Activated T-helper 1 cell treated with anti-CD3 and anti-CD28 coated beads, Interleukin-12 subunit alpha, Interleukin-12 subunit beta, Interleukin-2, Interleukin-4 antibody, amounts not matched to agents 30 ng/mL and 10 ng/mL and 1 ng/mL, durations not matched to agents 14 hours and 24 hours and 36 hours (primary cell): ENCODE measurements at regions of chr6 and their contacts with region 1.

Region 1: DNA sequence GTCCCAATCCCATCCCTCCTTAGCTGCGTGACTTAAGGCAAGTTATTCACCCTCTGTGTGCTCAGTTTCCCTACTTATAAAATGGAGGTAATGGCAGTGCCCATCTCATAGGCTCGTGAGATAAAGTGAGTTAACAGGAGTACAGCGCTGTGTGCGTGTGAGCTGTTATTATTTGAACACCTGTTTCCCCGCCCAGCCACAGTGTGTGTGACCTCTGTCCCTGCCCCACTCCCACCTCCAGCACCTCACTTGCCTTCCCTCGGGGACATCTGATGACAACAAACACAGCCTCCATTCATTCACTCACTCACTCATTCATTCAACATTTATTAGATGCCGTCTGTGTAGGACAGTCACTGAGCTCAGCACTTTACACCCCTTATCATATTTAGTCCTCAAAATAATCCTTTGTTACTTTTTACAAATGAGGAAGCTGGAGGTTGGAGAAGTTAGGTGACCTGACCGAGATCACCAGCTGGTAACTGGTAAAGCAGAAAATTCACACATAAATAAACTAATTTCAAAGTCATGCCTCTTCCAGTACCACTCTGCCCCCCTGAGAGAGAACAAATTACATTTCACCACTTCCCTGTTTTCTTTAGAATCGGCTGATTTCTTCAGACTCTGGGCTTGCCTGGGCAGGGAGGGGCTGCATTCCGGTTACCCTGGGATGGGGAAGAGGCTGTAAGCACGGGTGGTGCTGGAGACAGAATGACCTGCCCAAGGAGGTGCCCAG is 58.6 kb downstream of the CPNE5 start:
- DNase-seq: no peak
- H3K4me3 Mint-ChIP-seq: no peak overlapping the region
- H3K27ac Mint-ChIP-seq: no peak overlapping the region
- H3K4me1 Mint-ChIP-seq: peaks cover 6% of the 10 kb centered on the region
- H3K27me3 Mint-ChIP-seq: peaks cover 4% of the 10 kb centered on the region

Region 2: DNA sequence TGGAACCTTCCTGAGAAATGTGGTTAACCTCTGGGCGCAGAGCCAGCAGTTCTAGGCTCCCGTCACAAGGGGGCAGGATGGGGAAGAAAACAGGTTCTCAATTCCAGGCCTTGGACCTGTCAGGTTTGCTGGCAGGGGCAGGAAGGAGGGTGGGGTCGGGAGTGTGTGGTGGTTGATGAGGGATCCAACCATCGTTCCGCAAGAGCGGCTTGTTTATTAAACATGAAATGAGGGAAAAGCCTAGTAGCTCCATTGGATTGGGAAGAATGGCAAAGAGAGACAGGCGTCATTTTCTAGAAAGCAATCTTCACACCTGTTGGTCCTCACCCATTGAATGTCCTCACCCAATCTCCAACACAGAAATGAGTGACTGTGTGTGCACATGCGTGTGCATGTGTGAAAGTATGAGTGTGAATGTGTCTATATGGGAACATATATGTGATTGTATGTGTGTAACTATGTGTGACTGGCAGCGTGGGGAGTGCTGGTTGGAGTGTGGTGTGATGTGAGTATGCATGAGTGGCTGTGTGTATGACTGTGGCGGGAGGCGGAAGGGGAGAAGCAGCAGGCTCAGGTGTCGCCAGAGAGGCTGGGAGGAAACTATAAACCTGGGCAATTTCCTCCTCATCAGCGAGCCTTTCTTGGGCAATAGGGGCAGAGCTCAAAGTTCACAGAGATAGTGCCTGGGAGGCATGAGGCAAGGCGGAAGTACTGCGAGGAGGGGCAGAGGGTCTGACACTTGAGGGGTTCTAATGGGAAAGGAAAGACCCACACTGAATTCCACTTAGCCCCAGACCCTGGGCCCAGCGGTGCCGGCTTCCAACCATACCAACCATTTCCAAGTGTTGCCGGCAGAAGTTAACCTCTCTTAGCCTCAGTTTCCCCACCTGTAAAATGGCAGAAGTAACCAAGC is 156.8 kb before region 1 on chr6:
- intact Hi-C with region 1: loop called (anchors 1 kb)
- DNase-seq: peak; percentile 65
- H3K4me3 Mint-ChIP-seq: no peak overlapping the region
- H3K27ac Mint-ChIP-seq: peak overlapping the region; percentile 9
- H3K4me1 Mint-ChIP-seq: peaks cover 33% of the 10 kb centered on the region
- H3K27me3 Mint-ChIP-seq: no peaks in the 10 kb centered on the region

Region 3: GRCh38 chr6:36724514-36725390 is 55.9 kb before region 1 on chr6:
- intact Hi-C with region 1: no loop called
- DNase-seq: peak; percentile 13
- H3K4me3 Mint-ChIP-seq: no peak overlapping the region
- H3K27ac Mint-ChIP-seq: no peak overlapping the region
- H3K4me1 Mint-ChIP-seq: peaks cover 47% of the 10 kb centered on the region
- H3K27me3 Mint-ChIP-seq: no peaks in the 10 kb centered on the region

Region 4: GRCh38 chr6:36820700-36821580 is 40.3 kb after region 1 on chr6:
- intact Hi-C with region 1: no loop called
- DNase-seq: no peak
- H3K4me3 Mint-ChIP-seq: no peak overlapping the region
- H3K27ac Mint-ChIP-seq: no peak overlapping the region
- H3K4me1 Mint-ChIP-seq: peaks cover 11% of the 10 kb centered on the region
- H3K27me3 Mint-ChIP-seq: peaks cover 10% of the 10 kb centered on the region

Region 5: DNA sequence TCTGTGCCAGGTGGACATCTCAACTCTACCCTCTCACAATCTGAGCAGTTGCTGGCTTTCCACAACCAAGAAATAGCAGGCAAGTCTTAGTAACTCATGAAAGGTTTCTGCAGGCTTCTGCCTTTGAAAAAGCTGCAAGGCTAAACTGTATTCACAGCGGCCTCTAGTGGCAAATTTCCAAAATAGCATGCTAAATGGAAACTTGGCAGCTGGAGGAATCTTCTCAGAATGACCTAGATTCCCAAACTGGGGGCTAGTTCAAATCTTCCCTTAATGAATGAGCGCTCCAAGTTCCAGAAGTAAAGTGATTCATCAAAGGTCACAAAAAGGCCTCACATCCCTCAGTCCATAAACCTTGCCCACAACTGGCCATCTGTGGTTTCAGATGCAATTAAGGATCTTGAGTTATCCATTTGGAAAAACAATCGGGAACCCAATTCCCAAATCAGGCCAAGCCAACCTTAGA is 70.6 kb after region 1 on chr6:
- intact Hi-C with region 1: loop called (anchors 5 kb)
- DNase-seq: peak; percentile 26
- H3K4me3 Mint-ChIP-seq: no peak overlapping the region
- H3K27ac Mint-ChIP-seq: no peak overlapping the region
- H3K4me1 Mint-ChIP-seq: peaks cover 12% of the 10 kb centered on the region
- H3K27me3 Mint-ChIP-seq: no peaks in the 10 kb centered on the region